ENCODE measurements at regions of chr15 and their contacts with region 1.

Region 1: GRCh38 chr15:65638681-65639089 is 16.9 kb downstream of the SLC24A1 start:
- DNase-seq: peak; percentile 55
- H3K4me3 ChIP-seq: no peak overlapping the region
- H3K27ac ChIP-seq: no peak overlapping the region
- H3K27me3 ChIP-seq: no peaks in the 10 kb centered on the region
- CTCF ChIP-seq: peak; percentile 90

Region 2: DNA sequence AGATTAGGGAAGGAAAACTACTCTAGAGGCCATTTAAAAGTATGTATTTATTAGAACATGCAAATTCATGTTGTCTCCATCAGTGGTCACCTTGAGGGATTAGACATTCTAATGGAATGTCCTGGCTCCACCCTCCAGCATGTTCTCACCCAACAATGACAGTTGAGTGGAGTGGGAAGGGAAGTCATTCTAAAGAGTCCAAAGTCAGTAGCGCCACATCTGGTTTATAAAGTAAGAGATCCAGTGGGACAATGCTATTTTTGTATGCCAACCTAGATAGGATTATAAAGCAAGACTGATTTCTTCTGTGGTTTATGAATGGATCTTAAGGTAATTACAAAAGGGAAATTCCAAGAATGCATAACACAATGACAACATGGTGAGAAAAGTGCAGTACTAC is 16.3 kb after region 1 on chr15:
- CTCF ChIA-PET with region 1: interaction called, 26 read pairs
- POLR2A ChIA-PET with region 1: no interaction called
- DNase-seq: no peak
- H3K4me3 ChIP-seq: no peak overlapping the region
- H3K27ac ChIP-seq: no peak overlapping the region
- H3K27me3 ChIP-seq: no peaks in the 10 kb centered on the region
- CTCF ChIP-seq: no peak

Region 3: DNA sequence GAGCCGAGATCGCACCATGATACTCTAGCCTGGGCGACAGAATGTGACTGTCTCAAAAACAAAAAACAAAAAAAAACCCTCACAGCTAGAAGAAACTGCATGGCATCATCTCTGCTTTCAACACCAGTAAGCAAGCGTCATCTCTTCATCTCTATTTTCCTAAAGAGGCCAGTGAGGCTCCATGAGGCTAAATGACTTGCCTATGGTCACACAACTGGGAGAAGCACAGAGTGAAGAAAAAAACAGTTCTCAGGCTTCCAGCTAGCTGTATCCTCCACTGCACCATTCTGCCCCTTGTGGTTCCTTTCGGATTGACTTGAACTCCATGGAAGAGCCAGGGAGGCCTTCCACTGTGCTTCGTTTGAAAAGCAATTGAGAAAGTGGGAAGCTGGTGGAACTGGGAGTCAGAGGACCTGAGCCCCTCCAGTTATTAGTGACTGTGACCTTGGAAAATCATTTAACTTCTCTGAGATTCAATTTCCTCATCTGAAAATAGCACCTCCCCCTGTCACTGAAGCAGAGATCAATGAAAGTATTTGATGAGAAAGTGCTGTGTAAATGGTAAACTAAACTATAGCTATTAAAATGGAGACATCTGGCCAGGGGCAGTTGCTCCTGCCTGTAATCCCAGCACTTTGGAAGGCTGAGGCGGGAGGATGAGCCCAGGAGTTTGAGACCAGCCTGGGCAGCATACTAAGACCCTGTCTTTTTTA is 185.5 kb after region 1 on chr15:
- CTCF ChIA-PET with region 1: interaction called, 14 read pairs
- POLR2A ChIA-PET with region 1: no interaction called
- DNase-seq: no peak
- H3K4me3 ChIP-seq: no peak overlapping the region
- H3K27ac ChIP-seq: no peak overlapping the region
- H3K27me3 ChIP-seq: no peaks in the 10 kb centered on the region
- CTCF ChIP-seq: peak; percentile 84

Region 4: GRCh38 chr15:65869127-65869953 is 230.7 kb after region 1 on chr15 and contains the start of gene RAB11A:
- CTCF ChIA-PET with region 1: interaction called, 11 read pairs
- POLR2A ChIA-PET with region 1: interaction called, 3 read pairs
- DNase-seq: peak; percentile 93
- H3K4me3 ChIP-seq: peak within 1 kb of the TSS; percentile 99
- H3K27ac ChIP-seq: peak within 1 kb of the TSS; percentile 83
- H3K27me3 ChIP-seq: no peaks in the 10 kb centered on the region
- CTCF ChIP-seq: peak; percentile 44
- polyA plus RNA-seq, gene RAB11A: 315 and 399 TPM in 2 replicates

Measured in AG04450 (cell line).